Activated B cell treated with CpG ODN at 0.5 μM for 24 hours (primary cell): ENCODE measurements at regions of chr2 and their contacts with region 1.

Region 1: DNA sequence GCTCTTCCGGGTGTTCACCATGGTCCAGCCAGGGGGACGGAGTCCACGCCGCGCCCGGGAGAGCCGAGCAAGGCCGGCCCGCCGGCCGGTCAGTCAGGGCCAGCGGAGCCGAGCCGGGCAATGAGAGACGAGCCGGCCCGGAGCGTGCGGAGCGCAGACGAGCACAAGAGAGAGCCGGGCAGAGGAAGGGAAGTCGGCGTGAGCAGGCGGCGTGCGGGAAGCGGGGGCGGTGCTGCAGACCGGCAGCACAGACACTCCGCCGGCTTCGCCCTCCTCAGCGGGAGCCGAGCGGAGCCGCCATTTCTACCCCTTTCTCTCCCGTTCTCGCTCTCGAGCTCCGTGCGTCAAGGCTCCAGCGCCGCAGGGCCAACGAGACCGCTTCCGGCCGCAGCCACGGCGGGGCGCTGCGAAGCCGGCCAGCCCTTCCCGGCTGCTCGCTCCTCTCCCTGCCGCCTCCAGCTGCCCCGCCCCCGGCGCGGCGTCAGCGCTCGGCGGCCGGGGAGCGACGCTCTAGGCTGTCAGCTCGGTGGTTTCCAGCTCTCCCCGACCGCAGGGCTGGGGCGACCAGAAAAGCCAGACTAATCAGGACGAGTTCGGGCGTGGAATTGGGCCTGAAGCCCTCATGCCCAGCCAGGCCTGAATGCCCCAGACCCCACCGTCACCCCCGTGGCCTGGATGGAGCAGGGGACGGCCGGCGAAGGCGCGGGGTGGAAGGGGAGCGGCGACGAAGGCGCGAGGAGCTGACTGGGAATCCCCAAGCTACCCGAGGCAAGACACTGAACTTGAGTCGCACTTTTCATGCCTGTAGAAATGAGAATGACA is at the start of gene ATAD2B:
- DNase-seq: peak; percentile 96
- ATAC-seq: peak; percentile 79
- H3K4me3 Mint-ChIP-seq: peak within 1 kb of the TSS; percentile 97
- H3K27ac Mint-ChIP-seq: peak within 1 kb of the TSS; percentile 99
- H3K4me1 Mint-ChIP-seq: peaks cover 46% of the 10 kb centered on the region
- H3K27me3 Mint-ChIP-seq: no peaks in the 10 kb centered on the region
- CTCF ChIP-seq: no peak
- total RNA-seq, gene ATAD2B: 64.5 and 85.5 TPM in 2 replicates

Region 2: GRCh38 chr2:23867449-23867848 is 59.5 kb before region 1 on chr2:
- CTCF ChIA-PET with region 1: interaction called, 4 read pairs
- POLR2A ChIA-PET with region 1: interaction called, 8 read pairs
- intact Hi-C with region 1: loop called (anchors 10 kb)
- DNase-seq: no peak
- ATAC-seq: no peak
- H3K4me3 Mint-ChIP-seq: no peak overlapping the region
- H3K27ac Mint-ChIP-seq: peak overlapping the region; percentile 8
- H3K4me1 Mint-ChIP-seq: no peaks in the 10 kb centered on the region
- H3K27me3 Mint-ChIP-seq: no peaks in the 10 kb centered on the region
- CTCF ChIP-seq: no peak

Region 3: DNA sequence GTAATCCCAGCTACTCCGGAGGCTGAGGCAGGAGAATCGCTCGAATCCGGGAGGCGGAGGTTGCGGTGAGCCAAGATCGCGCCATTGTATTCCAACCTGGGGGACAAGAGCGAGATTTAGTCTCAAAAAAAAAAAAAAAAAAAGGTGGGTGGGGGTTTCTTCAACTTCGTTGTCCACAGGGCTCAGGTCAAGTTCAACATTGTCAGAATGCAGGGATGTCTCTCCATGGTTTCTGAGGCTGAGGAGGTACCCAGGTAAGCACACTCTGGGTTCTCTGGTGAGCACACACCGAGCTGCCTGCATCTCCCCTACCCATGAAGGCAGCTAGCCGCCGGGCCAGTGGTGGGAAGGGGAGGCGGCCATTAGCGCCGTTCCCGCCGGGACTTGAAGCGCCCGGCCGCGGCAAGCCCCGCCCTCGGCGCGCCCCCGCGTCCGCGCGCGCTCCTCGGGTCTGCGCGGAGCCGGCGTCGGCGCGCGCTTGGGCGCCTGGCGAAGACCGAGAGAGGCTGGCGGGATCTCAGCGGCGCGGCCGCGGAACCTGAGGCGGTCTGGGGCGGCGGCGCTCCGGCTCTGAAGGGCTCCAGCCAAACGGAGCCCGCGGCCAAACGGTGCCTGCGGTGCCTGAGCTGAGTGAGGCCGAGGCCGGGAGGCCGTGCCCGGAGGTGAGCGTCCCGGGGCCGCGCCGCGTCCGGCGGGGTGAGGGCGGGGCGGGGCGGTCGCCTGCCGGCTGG is 13.2 kb after region 1 on chr2 and contains the start of gene UBXN2A:
- CTCF ChIA-PET with region 1: interaction called, 22 read pairs
- POLR2A ChIA-PET with region 1: interaction called, 165 read pairs
- intact Hi-C with region 1: loop called (anchors 1 kb)
- DNase-seq: peak; percentile 87
- ATAC-seq: peak; percentile 82
- H3K4me3 Mint-ChIP-seq: peak within 1 kb of the TSS; percentile 88
- H3K27ac Mint-ChIP-seq: peak within 1 kb of the TSS; percentile 81
- H3K4me1 Mint-ChIP-seq: peaks cover 13% of the 10 kb centered on the region
- H3K27me3 Mint-ChIP-seq: no peaks in the 10 kb centered on the region
- CTCF ChIP-seq: no peak
- total RNA-seq, gene UBXN2A: 9.4 and 12.8 TPM in 2 replicates

Region 4: GRCh38 chr2:24046930-24047702 is 120.2 kb after region 1 on chr2 and contains the start of gene WDCP:
- CTCF ChIA-PET with region 1: interaction called, 7 read pairs
- POLR2A ChIA-PET with region 1: interaction called, 57 read pairs
- intact Hi-C with region 1: loop called (anchors 1 kb)
- DNase-seq: peak; percentile 79
- ATAC-seq: peak; percentile 98
- H3K4me3 Mint-ChIP-seq: peak within 1 kb of the TSS; percentile 96
- H3K27ac Mint-ChIP-seq: peak within 1 kb of the TSS; percentile 89
- H3K4me1 Mint-ChIP-seq: peaks cover 29% of the 10 kb centered on the region
- H3K27me3 Mint-ChIP-seq: no peaks in the 10 kb centered on the region
- CTCF ChIP-seq: no peak
- total RNA-seq, gene WDCP: 20.0 and 20.6 TPM in 2 replicates

Region 5: DNA sequence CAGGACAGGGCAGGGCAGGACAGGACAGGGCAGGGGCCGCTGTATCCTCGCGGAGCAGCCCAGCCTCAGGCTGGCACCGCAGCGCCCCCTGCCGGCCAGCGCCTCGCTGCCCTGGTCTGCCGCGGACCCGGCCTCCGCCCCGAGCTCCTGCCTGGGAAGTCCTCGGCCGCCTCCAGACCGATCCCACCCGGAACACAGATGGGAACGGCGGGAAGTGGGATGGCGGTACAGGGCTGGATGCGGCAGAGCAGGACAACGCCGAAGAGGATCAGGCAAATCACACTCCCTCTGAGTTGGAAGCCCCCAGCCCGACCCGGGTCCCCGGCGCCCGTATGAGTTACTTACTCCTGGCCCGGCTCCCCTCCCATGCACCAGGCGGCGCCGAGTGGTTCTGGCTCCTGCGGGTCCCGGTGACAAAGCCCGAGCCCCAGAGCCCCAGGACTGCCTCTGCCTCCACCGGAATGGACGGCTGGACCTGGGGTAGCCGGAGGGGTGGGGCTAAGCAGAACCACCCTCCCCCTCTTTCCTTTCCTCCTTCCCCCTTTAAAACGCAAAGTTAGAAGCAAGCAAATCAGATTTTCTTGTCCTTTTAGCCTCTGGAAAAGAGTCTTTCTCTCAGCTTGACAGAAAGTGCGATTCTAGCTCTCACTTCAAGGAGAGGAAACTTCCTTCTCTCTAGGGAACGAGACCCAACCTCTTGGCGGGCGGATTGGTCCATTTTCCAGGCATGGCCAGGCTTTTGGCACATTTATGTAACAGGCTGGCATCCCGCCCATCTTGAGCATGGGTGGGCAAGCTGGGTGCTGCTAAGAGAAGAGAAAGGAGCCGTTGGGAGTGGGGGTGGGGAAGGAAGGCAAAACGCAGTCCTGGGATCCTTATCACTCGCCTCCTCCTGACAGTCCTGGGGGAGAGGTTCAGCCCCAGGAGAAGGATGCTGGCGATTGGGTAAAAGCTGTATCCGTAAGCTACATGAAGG is 157.7 kb after region 1 on chr2 and contains the start of gene TP53I3:
- CTCF ChIA-PET with region 1: interaction called, 53 read pairs
- POLR2A ChIA-PET with region 1: interaction called, 53 read pairs
- intact Hi-C with region 1: loop called (anchors 1 kb)
- DNase-seq: peak; percentile 93
- ATAC-seq: peak; percentile 85
- H3K4me3 Mint-ChIP-seq: peak within 1 kb of the TSS; percentile 92
- H3K27ac Mint-ChIP-seq: peak within 1 kb of the TSS; percentile 92
- H3K4me1 Mint-ChIP-seq: peaks cover 16% of the 10 kb centered on the region
- H3K27me3 Mint-ChIP-seq: no peaks in the 10 kb centered on the region
- CTCF ChIP-seq: peak; percentile 72
- total RNA-seq, gene TP53I3: 4.4 and 6.3 TPM in 2 replicates

Region 6: GRCh38 chr2:24360050-24360962 is 433.3 kb after region 1 on chr2 and contains the start of gene ITSN2:
- CTCF ChIA-PET with region 1: no interaction called
- POLR2A ChIA-PET with region 1: interaction called, 8 read pairs
- intact Hi-C with region 1: loop called (anchors 10 kb)
- DNase-seq: peak; percentile 88
- ATAC-seq: peak; percentile 85
- H3K4me3 Mint-ChIP-seq: peak within 1 kb of the TSS; percentile 91
- H3K27ac Mint-ChIP-seq: peak within 1 kb of the TSS; percentile 97
- H3K4me1 Mint-ChIP-seq: peaks cover 50% of the 10 kb centered on the region
- H3K27me3 Mint-ChIP-seq: no peaks in the 10 kb centered on the region
- CTCF ChIP-seq: no peak
- total RNA-seq, gene ITSN2: 147 and 156 TPM in 2 replicates